ENCODE measurements at regions of chr15 and their contacts with region 1.

Region 1: DNA sequence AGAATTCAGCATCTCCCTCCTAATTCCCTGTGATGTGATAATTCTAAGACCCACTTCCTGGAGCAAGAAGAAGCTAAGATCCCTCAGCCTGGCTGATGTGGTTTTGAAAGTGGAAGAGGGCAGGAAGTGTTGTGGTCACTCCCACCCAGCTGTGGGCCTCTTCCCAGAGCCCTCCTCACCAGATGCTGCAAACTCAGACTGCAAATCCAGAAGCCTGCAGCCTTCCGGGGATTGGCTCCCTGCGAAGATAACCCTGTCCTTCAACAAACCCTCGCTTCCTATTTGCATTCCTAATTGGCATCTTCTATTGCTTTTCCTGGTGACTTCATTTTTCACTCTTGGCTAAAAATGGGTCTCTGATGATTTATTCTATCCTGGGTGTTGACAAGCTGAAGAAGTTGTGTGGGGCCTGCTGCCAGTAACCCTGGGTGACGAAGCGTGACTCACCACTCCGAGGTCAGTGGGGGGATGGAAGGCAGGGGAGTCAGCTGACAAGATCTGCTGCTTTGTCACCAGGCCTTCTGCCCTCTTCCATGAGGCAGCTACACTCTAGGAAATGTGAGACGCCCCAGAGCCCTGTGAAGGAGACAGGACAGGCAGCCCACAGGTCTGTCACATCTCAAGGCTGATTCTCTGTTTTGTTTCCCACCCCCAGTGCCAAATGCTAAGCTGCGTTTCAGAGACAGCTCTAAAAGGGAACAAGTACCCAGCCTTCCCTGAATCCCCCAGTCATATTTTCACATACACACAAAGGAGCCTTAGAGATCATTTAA is 99.7 kb upstream of the LIPC start:
- DNase-seq: peak; percentile 100
- ATAC-seq: peak; percentile 87
- H3K4me3 ChIP-seq: no peak overlapping the region
- H3K27ac ChIP-seq: peak overlapping the region; percentile 93
- H3K4me1 ChIP-seq: peaks cover 25% of the 10 kb centered on the region
- H3K27me3 ChIP-seq: no peaks in the 10 kb centered on the region
- CTCF ChIP-seq: no peak
- POLR2A ChIP-seq: no peak
- RAD21 ChIP-seq: peak; percentile 42

Region 2: GRCh38 chr15:58227706-58228543 is 104.2 kb before region 1 on chr15:
- CTCF ChIA-PET with region 1: interaction called, 4 read pairs
- POLR2A ChIA-PET with region 1: no interaction called
- dilution Hi-C with region 1: no loop called
- in situ Hi-C with region 1: no loop called
- intact Hi-C with region 1: loop called (anchors 5 kb)
- DNase-seq: peak; percentile 84
- ATAC-seq: peak; percentile 76
- H3K4me3 ChIP-seq: no peak overlapping the region
- H3K27ac ChIP-seq: no peak overlapping the region
- H3K4me1 ChIP-seq: peaks cover 14% of the 10 kb centered on the region
- H3K27me3 ChIP-seq: no peaks in the 10 kb centered on the region
- CTCF ChIP-seq: peak; percentile 95
- POLR2A ChIP-seq: 0 out of 2 replicates have a peak, but pooled peaks have one; percentile 41
- RAD21 ChIP-seq: peak; percentile 99

Region 3: GRCh38 chr15:58361291-58361759 is 29.2 kb after region 1 on chr15:
- CTCF ChIA-PET with region 1: no interaction called
- POLR2A ChIA-PET with region 1: interaction called, 3 read pairs
- dilution Hi-C with region 1: no loop called
- in situ Hi-C with region 1: no loop called
- intact Hi-C with region 1: loop called (anchors 1 kb)
- DNase-seq: peak; percentile 99
- ATAC-seq: peak; percentile 89
- H3K4me3 ChIP-seq: no peak overlapping the region; the same call in 1 of the 2 replicates
- H3K27ac ChIP-seq: peak overlapping the region; percentile 99
- H3K4me1 ChIP-seq: peaks cover 29% of the 10 kb centered on the region
- H3K27me3 ChIP-seq: no peaks in the 10 kb centered on the region
- CTCF ChIP-seq: no peak
- POLR2A ChIP-seq: no peak
- RAD21 ChIP-seq: peak; percentile 26

Region 4: DNA sequence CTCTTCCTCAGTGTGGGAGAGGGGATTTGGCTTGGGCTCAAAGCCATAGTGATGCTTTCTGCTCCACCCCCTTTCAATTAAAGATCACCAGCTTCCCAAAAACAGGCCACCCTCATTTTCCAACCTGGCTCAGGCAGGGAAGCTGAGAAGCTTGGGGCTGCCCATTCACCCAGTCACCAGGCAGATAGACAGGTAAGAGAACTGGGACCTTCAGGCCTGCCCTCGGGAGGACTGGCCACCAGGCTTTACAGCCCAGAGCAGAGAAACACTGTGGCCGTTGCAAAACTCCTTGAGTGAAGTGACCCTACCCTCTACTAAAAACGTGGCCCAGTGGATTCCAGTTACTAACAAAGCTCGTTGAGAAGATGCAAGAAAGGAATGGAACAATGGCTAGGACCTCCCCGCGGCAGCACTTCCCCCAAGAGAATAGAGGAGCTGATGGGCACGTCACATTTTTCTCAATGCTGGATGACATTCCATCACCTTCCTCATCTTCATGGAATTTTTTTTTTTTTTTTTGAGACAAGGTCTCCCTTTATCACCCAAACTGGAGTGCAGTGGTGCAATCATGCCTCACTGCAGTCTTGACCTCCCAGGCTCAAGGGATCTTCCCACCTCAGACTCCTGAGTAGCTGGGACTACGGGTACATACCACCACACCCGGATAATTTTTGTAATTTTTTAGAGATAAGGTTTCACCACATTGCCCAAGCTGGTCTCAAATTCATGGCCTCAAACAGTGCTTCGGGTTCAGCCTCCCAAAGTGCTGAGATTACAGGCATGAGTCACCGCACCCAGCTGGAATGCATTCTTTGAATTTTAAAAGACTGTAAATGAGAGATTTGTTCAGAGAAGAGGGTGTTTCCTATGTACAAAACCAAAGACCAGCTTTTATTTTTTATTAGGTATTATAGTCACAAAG is 137.6 kb after region 1 on chr15:
- CTCF ChIA-PET with region 1: no interaction called
- POLR2A ChIA-PET with region 1: no interaction called
- dilution Hi-C with region 1: no loop called
- in situ Hi-C with region 1: no loop called
- intact Hi-C with region 1: loop called (anchors 5 kb)
- DNase-seq: peak; percentile 97
- ATAC-seq: peak; percentile 90
- H3K4me3 ChIP-seq: no peak overlapping the region
- H3K27ac ChIP-seq: peak overlapping the region; percentile 97
- H3K4me1 ChIP-seq: peaks cover 24% of the 10 kb centered on the region
- H3K27me3 ChIP-seq: no peaks in the 10 kb centered on the region
- CTCF ChIP-seq: no peak
- POLR2A ChIP-seq: no peak
- RAD21 ChIP-seq: no peak

Region 5: GRCh38 chr15:58498821-58499580 is 166.9 kb after region 1 on chr15:
- CTCF ChIA-PET with region 1: no interaction called
- POLR2A ChIA-PET with region 1: no interaction called
- dilution Hi-C with region 1: no loop called
- in situ Hi-C with region 1: no loop called
- intact Hi-C with region 1: loop called (anchors 2 kb)
- DNase-seq: peak; percentile 98
- ATAC-seq: peak; percentile 94
- H3K4me3 ChIP-seq: no peak overlapping the region
- H3K27ac ChIP-seq: peak overlapping the region; percentile 64
- H3K4me1 ChIP-seq: peaks cover 24% of the 10 kb centered on the region
- H3K27me3 ChIP-seq: no peaks in the 10 kb centered on the region
- CTCF ChIP-seq: no peak
- POLR2A ChIP-seq: no peak
- RAD21 ChIP-seq: no peak; the same call in 1 of the 2 replicates

Region 6: DNA sequence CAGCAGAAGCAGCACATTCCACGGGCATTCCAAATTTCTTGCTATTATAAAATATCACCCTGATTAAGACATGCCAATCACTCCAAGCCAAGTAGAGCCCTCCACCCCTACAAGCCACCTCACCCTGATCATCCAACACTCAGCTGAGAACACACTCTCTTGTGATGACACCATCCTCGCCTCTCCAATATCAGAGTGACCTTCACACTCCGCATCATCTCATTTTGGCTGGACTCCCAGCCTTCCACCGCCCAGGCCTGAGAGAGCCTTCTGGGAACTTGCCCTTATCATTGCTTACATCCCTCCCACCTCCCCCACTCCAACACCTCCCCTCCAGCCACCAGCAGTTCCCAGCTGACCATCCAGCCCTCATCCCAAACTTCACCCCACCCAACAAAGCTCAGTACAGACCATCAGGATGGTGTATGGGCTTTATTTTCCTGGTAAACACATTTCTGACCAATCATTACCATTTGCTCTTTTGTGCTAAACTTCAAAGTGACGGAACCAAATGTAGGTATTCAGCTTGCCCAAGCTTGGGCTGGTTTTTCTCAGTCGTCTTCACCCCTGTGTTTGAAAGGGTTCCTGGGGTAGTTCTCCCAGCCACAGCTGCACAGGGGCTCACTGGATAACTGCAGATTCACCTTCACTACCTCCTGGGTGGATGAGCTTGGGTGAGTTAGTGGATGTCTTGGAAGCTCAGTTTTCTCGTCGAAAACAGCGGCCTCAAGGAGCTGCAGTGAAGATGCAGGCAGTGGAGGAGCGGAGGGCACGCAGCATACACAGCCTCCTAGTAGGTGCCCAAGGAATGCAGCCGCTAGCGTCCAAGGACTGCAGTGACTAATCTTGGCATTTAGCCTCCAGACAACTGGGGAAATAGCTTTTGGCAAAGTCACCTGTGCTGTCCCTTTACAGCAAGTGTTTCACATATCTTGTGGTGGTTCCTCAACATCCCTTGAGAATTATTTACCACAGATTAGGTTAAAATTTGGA is 214.8 kb after region 1 on chr15:
- CTCF ChIA-PET with region 1: no interaction called
- POLR2A ChIA-PET with region 1: no interaction called
- dilution Hi-C with region 1: no loop called
- in situ Hi-C with region 1: no loop called
- intact Hi-C with region 1: loop called (anchors 1 kb)
- DNase-seq: peak; percentile 91
- ATAC-seq: peak; percentile 38
- H3K4me3 ChIP-seq: no peak overlapping the region
- H3K27ac ChIP-seq: peak overlapping the region; percentile 48
- H3K4me1 ChIP-seq: peaks cover 34% of the 10 kb centered on the region
- H3K27me3 ChIP-seq: peaks cover 4% of the 10 kb centered on the region; the same call in 1 of the 2 replicates
- CTCF ChIP-seq: no peak
- POLR2A ChIP-seq: no peak
- RAD21 ChIP-seq: peak; percentile 34; the same call in 1 of the 2 replicates

Region 7: DNA sequence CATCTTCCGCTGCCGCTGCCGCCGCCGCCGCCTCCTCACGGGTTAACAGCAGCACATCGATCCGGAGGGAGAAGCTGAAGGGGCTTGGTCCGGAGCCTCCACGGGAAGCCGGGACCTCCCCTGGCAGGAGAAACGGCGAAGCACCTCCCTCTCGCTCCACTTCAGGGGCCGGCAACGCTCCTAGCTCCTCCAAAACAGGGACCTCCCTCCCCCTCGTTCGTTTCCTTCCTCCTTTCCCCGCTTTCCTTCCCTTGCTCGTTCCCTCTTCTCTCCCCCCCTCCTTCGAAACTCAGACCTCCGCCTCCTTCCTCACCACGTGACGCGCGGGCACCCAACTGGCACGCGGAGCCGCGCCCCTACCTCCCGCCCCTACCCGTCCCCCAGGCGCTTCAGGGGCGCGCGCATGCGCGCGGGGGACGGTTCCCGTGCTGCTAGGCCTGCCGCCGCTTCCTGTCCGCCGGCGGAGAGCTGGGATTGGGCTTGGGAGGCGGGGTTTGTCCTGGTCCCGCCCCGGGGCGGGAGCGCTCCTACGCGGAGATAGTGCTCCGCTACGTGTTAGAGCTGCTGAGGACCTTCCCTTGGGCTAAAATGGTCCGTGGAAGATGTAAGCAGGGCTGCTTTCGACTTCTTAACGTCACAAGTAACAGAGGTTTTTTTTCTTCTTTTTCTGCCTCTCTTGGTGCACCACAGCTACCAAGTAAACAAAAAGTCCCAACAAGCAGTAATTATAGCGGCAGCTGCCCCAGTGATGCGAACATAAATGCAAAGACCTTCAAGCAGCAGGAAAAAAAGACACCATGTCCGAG is 417.6 kb after region 1 on chr15 and contains the start of gene ADAM10:
- CTCF ChIA-PET with region 1: no interaction called
- POLR2A ChIA-PET with region 1: no interaction called
- dilution Hi-C with region 1: no loop called
- in situ Hi-C with region 1: no loop called
- intact Hi-C with region 1: loop called (anchors 5 kb)
- DNase-seq: peak; percentile 99
- ATAC-seq: peak; percentile 94
- H3K4me3 ChIP-seq: peak within 1 kb of the TSS; percentile 74
- H3K27ac ChIP-seq: peak within 1 kb of the TSS; percentile 93
- H3K4me1 ChIP-seq: no peaks in the 10 kb centered on the region
- H3K27me3 ChIP-seq: no peaks in the 10 kb centered on the region
- CTCF ChIP-seq: no peak
- POLR2A ChIP-seq: peak; percentile 86
- RAD21 ChIP-seq: no peak; the same call in 1 of the 2 replicates
- total RNA-seq, gene ADAM10: 185 and 217 TPM in 2 replicates